ENCODE measurements at regions of chr15 and their contacts with region 1.

Region 1: GRCh38 chr15:41594801-41595746 is 36.1 kb downstream of the TYRO3 start:
- DNase-seq: peak in 1 of 2 donors; percentile 4
- H3K4me3 ChIP-seq: no peak overlapping the region
- H3K27ac ChIP-seq: no peak overlapping the region
- H3K4me1 ChIP-seq: no peaks in the 10 kb centered on the region
- H3K27me3 ChIP-seq: no peaks in the 10 kb centered on the region
- CTCF ChIP-seq: no peak
- POLR2A ChIP-seq: no peak

Region 2: GRCh38 chr15:41429003-41429890 is 165.8 kb before region 1 on chr15:
- intact Hi-C with region 1: no loop called
- DNase-seq: no peak
- H3K4me3 ChIP-seq: no peak overlapping the region
- H3K27ac ChIP-seq: peak overlapping the region in 1 of 3 donors; percentile 41
- H3K4me1 ChIP-seq: peaks cover 11 to 14% of the 10 kb centered on the region in 2 donors
- H3K27me3 ChIP-seq: no peaks in the 10 kb centered on the region
- CTCF ChIP-seq: no peak
- POLR2A ChIP-seq: no peak

Region 3: GRCh38 chr15:41517895-41518449 is 77.1 kb before region 1 on chr15:
- intact Hi-C with region 1: loop called (anchors 5 kb)
- DNase-seq: no peak
- H3K4me3 ChIP-seq: no peak overlapping the region
- H3K27ac ChIP-seq: no peak overlapping the region
- H3K4me1 ChIP-seq: peaks cover 5 to 10% of the 10 kb centered on the region in 2 donors
- H3K27me3 ChIP-seq: peaks cover 7% of the 10 kb centered on the region
- CTCF ChIP-seq: no peak
- POLR2A ChIP-seq: no peak

Region 4: DNA sequence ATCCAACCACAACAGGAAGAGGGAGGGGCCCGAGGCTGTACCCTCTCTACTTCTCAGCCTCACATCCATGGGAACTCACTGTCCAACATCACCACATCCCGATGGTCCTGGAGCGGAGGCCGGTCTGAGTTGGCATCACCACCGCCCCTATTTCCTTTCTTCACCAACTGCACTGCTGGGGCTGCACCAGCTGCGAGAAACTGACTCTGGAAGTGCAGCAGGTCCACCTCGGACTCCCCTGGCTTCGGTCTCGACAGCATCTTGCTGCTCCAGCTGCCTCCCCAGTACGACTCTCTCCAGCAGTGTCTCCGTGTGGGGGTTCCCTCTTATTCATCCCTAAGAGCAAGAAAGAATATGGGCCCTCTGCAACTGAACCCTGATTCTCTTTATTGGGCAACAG is 58.2 kb before region 1 on chr15:
- intact Hi-C with region 1: no loop called
- DNase-seq: no peak
- H3K4me3 ChIP-seq: no peak overlapping the region
- H3K27ac ChIP-seq: no peak overlapping the region
- H3K4me1 ChIP-seq: no peaks in the 10 kb centered on the region
- H3K27me3 ChIP-seq: no peaks in the 10 kb centered on the region
- CTCF ChIP-seq: no peak
- POLR2A ChIP-seq: no peak